Endothelial cell of umbilical vein (primary cell): ENCODE measurements at regions of chr1 and their contacts with region 1.

Region 1: DNA sequence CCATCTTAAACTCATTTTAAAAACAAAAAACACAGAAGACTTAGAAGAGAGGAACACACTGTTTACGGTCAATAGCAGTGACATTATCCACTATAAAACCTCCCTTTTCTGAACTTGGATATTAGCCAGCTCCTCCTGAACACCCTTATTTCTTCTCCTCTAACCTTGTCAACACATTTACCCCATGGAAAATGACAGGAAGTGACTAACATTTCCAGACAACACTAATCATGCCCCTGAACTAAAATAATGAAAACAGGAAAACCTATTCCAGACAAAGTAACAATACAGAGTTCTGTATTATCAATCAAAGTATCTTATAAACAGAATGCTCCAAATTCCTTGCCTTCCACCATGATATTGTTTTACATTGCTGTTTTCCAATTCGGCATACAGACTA is 45.3 kb downstream of the PALMD start:
- DNase-seq: peak; percentile 98
- H3K4me3 ChIP-seq: no peak overlapping the region
- H3K27ac ChIP-seq: peak overlapping the region; percentile 89
- H3K4me1 ChIP-seq: peaks cover 44% of the 10 kb centered on the region
- H3K27me3 ChIP-seq: no peaks in the 10 kb centered on the region
- CTCF ChIP-seq: no peak
- POLR2A ChIP-seq: peak; percentile 84

Region 2: GRCh38 chr1:98903261-98903660 is 787.9 kb before region 1 on chr1:
- CTCF ChIA-PET with region 1: no interaction called
- POLR2A ChIA-PET with region 1: no interaction called
- dilution Hi-C with region 1: no loop called
- intact Hi-C with region 1: loop called (anchors 1 kb)
- DNase-seq: peak; percentile 91
- H3K4me3 ChIP-seq: no peak overlapping the region
- H3K27ac ChIP-seq: peak overlapping the region; percentile 85
- H3K4me1 ChIP-seq: peaks cover 49% of the 10 kb centered on the region
- H3K27me3 ChIP-seq: no peaks in the 10 kb centered on the region
- CTCF ChIP-seq: no peak
- POLR2A ChIP-seq: no peak

Region 3: DNA sequence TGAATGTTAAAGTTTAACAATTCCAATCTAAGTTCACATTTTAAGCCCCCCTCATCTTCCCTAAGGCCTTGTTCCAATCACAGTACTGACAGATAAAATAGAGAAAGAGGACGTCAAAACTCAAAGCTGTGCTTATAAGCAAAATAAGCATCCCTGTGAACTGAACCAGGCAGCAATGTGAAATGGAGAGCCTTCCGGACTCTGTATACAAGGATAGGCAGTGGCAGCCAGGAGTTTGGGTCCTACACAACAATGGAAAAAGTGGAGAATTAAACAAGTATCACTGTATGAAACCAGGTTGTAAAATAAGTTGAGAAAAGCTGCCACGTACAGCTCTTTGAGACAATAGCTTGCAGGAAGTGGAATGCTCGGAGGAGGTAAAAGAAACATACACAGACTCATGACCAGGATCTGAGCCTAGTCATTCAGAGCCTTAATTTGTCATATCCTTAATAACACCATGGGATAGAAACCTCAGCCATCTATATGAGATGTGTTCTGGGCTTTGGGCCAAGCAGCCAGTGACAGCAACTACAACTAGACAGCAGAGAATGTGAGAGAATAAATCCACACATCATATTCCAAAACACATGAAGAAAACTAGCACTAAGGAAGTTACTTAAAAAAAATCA is 100.5 kb before region 1 on chr1:
- CTCF ChIA-PET with region 1: interaction called, 7 read pairs
- POLR2A ChIA-PET with region 1: no interaction called
- dilution Hi-C with region 1: no loop called
- intact Hi-C with region 1: loop called (anchors 1 kb)
- DNase-seq: peak; percentile 99
- H3K4me3 ChIP-seq: no peak overlapping the region
- H3K27ac ChIP-seq: peak overlapping the region; percentile 97
- H3K4me1 ChIP-seq: peaks cover 59% of the 10 kb centered on the region
- H3K27me3 ChIP-seq: no peaks in the 10 kb centered on the region
- CTCF ChIP-seq: no peak
- POLR2A ChIP-seq: peak; percentile 61

Region 4: GRCh38 chr1:99652881-99653281 is 38.3 kb before region 1 on chr1:
- CTCF ChIA-PET with region 1: interaction called, 19 read pairs
- POLR2A ChIA-PET with region 1: interaction called, 17 read pairs
- dilution Hi-C with region 1: no loop called
- intact Hi-C with region 1: loop called (anchors 1 kb)
- DNase-seq: peak; percentile 80
- H3K4me3 ChIP-seq: no peak overlapping the region
- H3K27ac ChIP-seq: peak overlapping the region; percentile 72
- H3K4me1 ChIP-seq: peaks cover 91% of the 10 kb centered on the region
- H3K27me3 ChIP-seq: no peaks in the 10 kb centered on the region
- CTCF ChIP-seq: no peak
- POLR2A ChIP-seq: no peak

Region 5: GRCh38 chr1:99728494-99729235 is 37.5 kb after region 1 on chr1:
- CTCF ChIA-PET with region 1: no interaction called
- POLR2A ChIA-PET with region 1: no interaction called
- dilution Hi-C with region 1: no loop called
- intact Hi-C with region 1: loop called (anchors 1 kb)
- DNase-seq: peak; percentile 74
- H3K4me3 ChIP-seq: peak overlapping the region in 1 of 3 experiments; percentile 34
- H3K27ac ChIP-seq: peak overlapping the region; percentile 13
- H3K4me1 ChIP-seq: peaks cover 19% of the 10 kb centered on the region
- H3K27me3 ChIP-seq: no peaks in the 10 kb centered on the region
- CTCF ChIP-seq: peak; percentile 41 to 70
- POLR2A ChIP-seq: no peak

Region 6: DNA sequence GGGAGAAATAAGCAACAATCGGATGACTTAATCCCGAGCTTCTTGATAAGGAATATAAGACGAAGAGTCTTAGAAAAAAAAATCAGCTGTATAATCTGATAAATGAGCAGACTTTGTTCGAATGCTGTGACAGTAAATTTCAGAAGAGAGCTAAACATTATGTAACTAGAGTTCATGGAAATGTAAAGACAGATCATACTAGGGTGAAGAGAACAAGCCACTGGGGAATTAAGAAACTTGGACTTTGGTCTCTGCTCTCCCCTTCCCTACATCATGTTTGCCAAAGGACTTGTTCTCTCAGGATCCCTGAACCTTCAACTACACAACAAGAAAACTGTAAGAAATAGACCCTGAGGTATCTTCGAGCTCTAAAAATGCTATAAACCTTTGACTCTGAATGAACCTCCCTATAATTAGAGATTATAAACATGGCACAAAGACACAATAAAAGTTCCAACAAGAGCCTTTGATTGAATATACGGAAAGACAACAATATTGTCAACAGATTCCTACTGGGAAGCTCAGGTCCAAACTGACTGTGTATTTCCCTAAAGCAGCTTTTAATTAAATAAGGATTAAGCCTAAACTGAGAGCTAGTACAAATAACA is 47.8 kb after region 1 on chr1:
- CTCF ChIA-PET with region 1: no interaction called
- POLR2A ChIA-PET with region 1: no interaction called
- dilution Hi-C with region 1: no loop called
- intact Hi-C with region 1: no loop called
- DNase-seq: no peak
- H3K4me3 ChIP-seq: no peak overlapping the region
- H3K27ac ChIP-seq: no peak overlapping the region
- H3K4me1 ChIP-seq: no peaks in the 10 kb centered on the region
- H3K27me3 ChIP-seq: no peaks in the 10 kb centered on the region
- CTCF ChIP-seq: no peak
- POLR2A ChIP-seq: no peak